Cardiac septum (tissue), 1 donor: ENCODE measurements at regions of chr22 and their contacts with region 1.

Region 1: GRCh38 chr22:44735540-44736488 is 16.6 kb upstream of the ARHGAP8 start:
- DNase-seq: peak; percentile 88

Region 2: DNA sequence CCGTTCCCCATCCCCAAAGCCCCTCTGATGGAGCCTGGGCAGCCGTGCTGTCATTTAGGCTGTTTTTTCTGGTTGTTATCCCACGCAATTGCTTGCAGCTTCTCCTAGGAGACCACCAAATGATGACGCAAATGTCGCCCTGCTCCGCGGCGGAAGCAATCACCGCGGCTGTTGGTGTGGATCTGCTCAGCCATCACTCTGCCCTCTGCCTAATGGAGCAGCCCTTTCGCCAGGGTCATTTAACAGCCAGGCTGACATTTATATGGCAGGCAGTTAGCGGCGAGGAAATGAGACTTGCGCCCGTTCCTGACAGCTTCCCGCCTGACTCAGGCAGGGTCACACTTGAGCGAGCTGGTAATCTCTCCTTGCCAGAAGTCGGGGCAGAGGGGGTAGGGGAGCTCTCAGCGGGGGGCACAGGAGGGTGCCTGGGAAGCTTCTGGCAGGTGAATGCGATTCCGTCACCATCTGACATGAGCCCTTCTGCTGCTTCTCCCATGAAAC is 139.9 kb before region 1 on chr22:
- intact Hi-C with region 1: no loop called
- DNase-seq: no peak

Region 3: GRCh38 chr22:44697423-44698141 is 38.2 kb before region 1 on chr22:
- intact Hi-C with region 1: loop called (anchors 1 kb)
- DNase-seq: peak; percentile 87